Calu3 (cell line): ENCODE measurements at regions of chr2 and their contacts with region 1.

Region 1: DNA sequence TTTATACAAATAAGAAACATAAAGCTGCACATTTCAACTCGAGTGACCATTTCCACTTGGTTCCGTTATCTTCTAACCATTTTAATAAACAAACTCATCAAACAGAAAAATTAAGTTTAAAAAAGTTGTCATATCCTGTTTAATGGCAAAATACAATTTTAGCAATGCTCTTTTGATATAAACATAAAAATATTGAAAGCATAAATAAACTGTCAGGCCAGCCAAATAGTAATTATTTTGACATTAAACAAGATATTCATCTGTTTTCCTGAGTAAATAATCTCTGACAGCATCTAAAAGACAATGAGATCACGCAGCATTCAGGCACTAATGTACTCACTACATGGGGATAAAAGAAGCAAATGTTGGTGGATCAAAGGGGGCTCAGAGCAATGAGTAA is 145.3 kb upstream of the ATP5MC3 start:
- DNase-seq: no peak
- H3K4me3 Mint-ChIP-seq: no peak overlapping the region
- H3K27ac Mint-ChIP-seq: no peak overlapping the region
- H3K4me1 Mint-ChIP-seq: no peaks in the 10 kb centered on the region
- H3K27me3 Mint-ChIP-seq: no peaks in the 10 kb centered on the region
- CTCF ChIP-seq: no peak

Region 2: DNA sequence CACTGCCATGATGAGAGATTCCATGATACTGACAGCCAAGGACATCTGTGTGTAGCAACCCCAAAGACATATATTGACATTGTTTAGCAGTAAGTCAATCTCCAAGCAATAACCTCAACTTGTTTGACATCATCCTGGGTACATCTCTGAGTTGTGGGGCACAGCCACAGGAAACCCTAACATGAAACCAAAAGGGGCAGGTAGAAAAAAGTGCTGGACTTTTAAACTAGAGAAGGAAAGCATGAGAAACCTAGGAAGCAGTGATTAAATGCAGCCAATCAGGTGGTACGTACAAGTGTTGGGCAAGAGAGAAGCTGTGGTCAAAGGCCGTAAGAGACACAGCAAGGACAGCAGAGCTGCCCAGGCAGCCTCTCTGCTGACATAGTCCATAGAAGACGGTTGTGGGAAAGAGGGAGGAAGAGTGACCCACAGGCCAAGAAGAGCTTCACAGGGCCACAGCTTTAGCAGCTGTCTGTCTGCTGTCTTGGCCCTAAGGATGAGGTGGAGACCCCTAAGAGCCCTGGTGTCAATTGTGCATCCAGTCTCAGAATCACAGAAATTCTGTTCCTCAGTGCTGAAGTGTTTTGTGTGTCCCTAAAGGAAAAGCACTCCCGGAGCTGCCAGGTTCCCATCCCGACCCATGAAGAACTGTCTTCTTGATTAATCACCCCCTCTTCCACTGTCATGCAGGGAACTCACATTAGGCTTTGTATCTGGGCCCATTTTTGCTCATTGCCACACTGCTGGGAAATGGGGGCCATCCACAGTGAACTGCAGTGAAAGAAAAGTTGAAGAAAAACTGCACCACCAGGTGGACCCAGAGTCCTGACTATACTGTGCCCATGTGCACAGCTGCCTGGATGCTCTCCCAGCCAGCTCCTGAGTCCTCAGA is 296.2 kb before region 1 on chr2:
- CTCF ChIA-PET with region 1: no interaction called
- intact Hi-C with region 1: loop called (anchors 2 kb)
- DNase-seq: peak; percentile 43
- H3K4me3 Mint-ChIP-seq: no peak overlapping the region
- H3K27ac Mint-ChIP-seq: no peak overlapping the region
- H3K4me1 Mint-ChIP-seq: no peaks in the 10 kb centered on the region
- H3K27me3 Mint-ChIP-seq: no peaks in the 10 kb centered on the region
- CTCF ChIP-seq: peak; percentile 44

Region 3: GRCh38 chr2:175914846-175915245 is 588.0 kb after region 1 on chr2:
- CTCF ChIA-PET with region 1: no interaction called
- intact Hi-C with region 1: no loop called
- DNase-seq: no peak
- H3K4me3 Mint-ChIP-seq: no peak overlapping the region
- H3K27ac Mint-ChIP-seq: no peak overlapping the region
- H3K4me1 Mint-ChIP-seq: no peaks in the 10 kb centered on the region
- H3K27me3 Mint-ChIP-seq: peaks cover 25% of the 10 kb centered on the region
- CTCF ChIP-seq: no peak